CD8-positive, alpha-beta T cell (primary cell): ENCODE measurements at regions of chr12 and their contacts with region 1.

Region 1: DNA sequence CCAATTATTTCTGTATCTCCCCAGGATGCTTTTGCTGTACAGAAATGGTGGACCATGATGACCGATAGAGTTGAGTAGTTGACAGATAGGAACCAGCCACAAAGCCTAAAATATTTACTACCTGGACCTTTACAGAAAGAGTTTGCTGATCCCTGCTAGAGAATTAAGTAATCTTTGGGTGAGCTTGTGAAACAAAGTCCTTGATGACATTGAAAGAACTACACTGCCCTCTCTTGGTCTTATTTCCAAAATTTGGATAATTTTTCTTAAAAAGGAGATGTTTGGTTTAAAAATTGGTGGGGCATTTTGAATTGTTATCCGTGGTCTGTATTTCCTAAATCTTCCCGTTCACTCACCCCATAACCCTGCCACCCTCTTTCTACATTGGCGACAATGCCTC is 13.7 kb upstream of the TCTN1 start:
- DNase-seq: peak in 2 of 9 experiments; percentile 61 to 73
- ATAC-seq: peak; percentile 48
- H3K4me3 ChIP-seq: no peak overlapping the region
- H3K4me3 Mint-ChIP-seq: no peak overlapping the region
- H3K27ac ChIP-seq: no peak overlapping the region
- H3K27ac Mint-ChIP-seq: peak overlapping the region; percentile 34
- H3K4me1 ChIP-seq: no peaks in the 10 kb centered on the region
- H3K4me1 Mint-ChIP-seq: peaks cover 4% of the 10 kb centered on the region
- H3K27me3 ChIP-seq: no peaks in the 10 kb centered on the region
- H3K27me3 Mint-ChIP-seq: no peaks in the 10 kb centered on the region
- CTCF ChIP-seq: peak; percentile 56

Region 2: GRCh38 chr12:110100315-110100970 is 499.8 kb before region 1 on chr12:
- CTCF ChIA-PET with region 1: interaction called, 4 read pairs
- POLR2A ChIA-PET with region 1: no interaction called
- intact Hi-C with region 1: loop called in 1 of 2 experiments (anchors 1 kb)
- DNase-seq: peak; percentile 15 to 82 (median 66)
- ATAC-seq: peak; percentile 85
- H3K4me3 ChIP-seq: no peak overlapping the region
- H3K4me3 Mint-ChIP-seq: no peak overlapping the region
- H3K27ac ChIP-seq: peak overlapping the region in 1 of 2 experiments; percentile 21
- H3K27ac Mint-ChIP-seq: peak overlapping the region; percentile 24
- H3K4me1 ChIP-seq: peaks cover 4% of the 10 kb centered on the region
- H3K4me1 Mint-ChIP-seq: peaks cover 7% of the 10 kb centered on the region
- H3K27me3 ChIP-seq: no peaks in the 10 kb centered on the region
- H3K27me3 Mint-ChIP-seq: no peaks in the 10 kb centered on the region
- CTCF ChIP-seq: peak; percentile 99

Region 3: DNA sequence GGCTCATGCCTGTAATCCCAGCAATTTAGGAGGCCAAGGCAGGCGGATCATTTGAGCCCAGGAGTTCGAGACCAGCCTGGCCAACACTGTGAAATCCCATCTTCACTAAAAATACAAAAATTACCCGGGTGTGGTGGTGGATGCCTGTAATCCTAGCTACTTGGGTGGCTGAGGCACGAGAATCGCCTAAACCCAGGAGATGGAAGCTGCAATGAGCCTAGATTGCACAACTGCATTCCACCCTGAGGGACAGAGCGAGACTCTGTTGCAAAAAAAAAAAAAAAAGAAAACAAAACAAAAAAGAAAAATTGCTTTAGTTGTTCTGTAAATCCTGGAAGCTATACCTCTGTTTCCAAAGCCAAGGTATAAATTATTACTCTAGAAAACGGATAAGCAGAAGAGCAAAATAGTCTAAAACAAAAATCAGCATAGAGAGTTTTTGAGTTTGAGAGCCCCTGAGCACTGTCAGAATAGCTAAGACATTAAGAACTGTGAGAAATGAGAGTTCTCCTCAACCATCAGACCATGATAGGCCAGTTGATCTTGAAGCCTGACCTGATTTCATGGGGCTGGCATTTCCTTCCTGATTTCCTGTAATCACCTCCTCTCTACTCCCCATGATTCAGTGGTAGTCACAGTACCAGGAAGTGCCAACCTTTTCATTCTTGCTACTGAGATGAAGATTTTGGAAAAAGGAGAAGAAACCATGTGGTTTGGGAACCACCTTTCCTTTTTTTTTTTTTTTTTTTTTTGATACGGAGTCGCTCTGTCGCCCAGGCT is 287.5 kb before region 1 on chr12:
- CTCF ChIA-PET with region 1: no interaction called
- POLR2A ChIA-PET with region 1: no interaction called
- intact Hi-C with region 1: no loop called
- DNase-seq: peak in 2 of 9 experiments; percentile 13 to 20
- ATAC-seq: no peak
- H3K4me3 ChIP-seq: no peak overlapping the region
- H3K4me3 Mint-ChIP-seq: peak overlapping the region; percentile 8
- H3K27ac ChIP-seq: no peak overlapping the region
- H3K27ac Mint-ChIP-seq: peak overlapping the region; percentile 37
- H3K4me1 ChIP-seq: peaks cover 13% of the 10 kb centered on the region
- H3K4me1 Mint-ChIP-seq: peaks cover 54% of the 10 kb centered on the region
- H3K27me3 ChIP-seq: no peaks in the 10 kb centered on the region
- H3K27me3 Mint-ChIP-seq: no peaks in the 10 kb centered on the region
- CTCF ChIP-seq: no peak

Region 4: DNA sequence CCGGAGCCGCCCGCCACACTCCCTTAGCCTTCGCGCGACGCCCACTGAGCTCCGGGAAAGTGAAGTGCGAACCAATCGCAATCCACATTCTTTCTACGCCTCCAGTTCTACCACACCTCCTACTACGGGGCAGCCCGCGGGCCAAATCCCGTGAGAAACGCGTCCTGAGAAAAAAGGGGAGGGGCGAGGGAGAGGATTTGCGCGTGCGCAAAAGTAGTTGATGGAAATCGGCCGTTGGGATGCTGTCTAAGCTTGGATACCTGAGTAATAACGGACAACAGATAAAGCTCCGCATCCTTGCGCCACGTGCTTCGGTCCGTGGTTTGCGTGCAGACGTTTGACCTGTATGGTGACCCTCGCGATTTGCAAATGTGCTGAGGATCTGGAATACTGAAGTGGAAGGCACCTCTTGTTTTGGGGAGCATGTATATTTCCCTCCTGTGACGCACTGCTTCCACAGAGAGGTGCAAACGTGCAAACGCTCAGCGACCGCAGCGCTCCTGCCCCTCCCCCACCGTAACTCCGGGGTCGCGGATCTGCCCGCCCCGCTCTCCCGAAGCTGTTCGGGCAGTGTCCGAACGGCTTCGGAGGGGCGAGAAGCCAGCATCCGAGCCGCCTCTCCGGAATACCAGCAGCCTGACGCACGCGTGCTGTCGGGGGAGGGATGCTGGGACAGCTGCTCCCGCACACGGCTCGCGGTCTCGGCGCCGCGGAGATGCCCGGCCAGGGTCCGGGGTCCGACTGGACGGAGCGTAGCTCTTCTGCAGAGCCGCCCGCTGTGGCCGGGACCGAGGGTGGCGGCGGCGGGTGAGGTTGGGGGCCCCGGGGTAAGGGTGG is 131.8 kb before region 1 on chr12 and contains the starts of genes FAM216A and GPN3:
- CTCF ChIA-PET with region 1: interaction called, 73 read pairs
- POLR2A ChIA-PET with region 1: interaction called, 11 read pairs
- intact Hi-C with region 1: loop called (anchors 1 kb)
- DNase-seq: peak; percentile 89 to 98 (median 95)
- ATAC-seq: peak; percentile 89
- H3K4me3 ChIP-seq: peak within 1 kb of the TSS; percentile 90 to 96
- H3K4me3 Mint-ChIP-seq: peak within 1 kb of the TSS; percentile 99
- H3K27ac ChIP-seq: peak within 1 kb of the TSS; percentile 74 to 87
- H3K27ac Mint-ChIP-seq: peak within 1 kb of the TSS; percentile 95
- H3K4me1 ChIP-seq: peaks cover 23% of the 10 kb centered on the region
- H3K4me1 Mint-ChIP-seq: peaks cover 43% of the 10 kb centered on the region
- H3K27me3 ChIP-seq: no peaks in the 10 kb centered on the region
- H3K27me3 Mint-ChIP-seq: no peaks in the 10 kb centered on the region
- CTCF ChIP-seq: no peak
- total RNA-seq, gene FAM216A: 3.5 to 4.5 TPM
- total RNA-seq, gene GPN3: 5.9 to 6.2 TPM

Region 5: GRCh38 chr12:110513842-110514241 is 86.4 kb before region 1 on chr12:
- CTCF ChIA-PET with region 1: interaction called, 128 read pairs
- POLR2A ChIA-PET with region 1: no interaction called
- intact Hi-C with region 1: loop called (anchors 1 kb)
- DNase-seq: no peak
- ATAC-seq: no peak
- H3K4me3 ChIP-seq: no peak overlapping the region
- H3K4me3 Mint-ChIP-seq: no peak overlapping the region
- H3K27ac ChIP-seq: no peak overlapping the region
- H3K27ac Mint-ChIP-seq: no peak overlapping the region
- H3K4me1 ChIP-seq: no peaks in the 10 kb centered on the region
- H3K4me1 Mint-ChIP-seq: no peaks in the 10 kb centered on the region
- H3K27me3 ChIP-seq: no peaks in the 10 kb centered on the region
- H3K27me3 Mint-ChIP-seq: no peaks in the 10 kb centered on the region
- CTCF ChIP-seq: no peak

Region 6: DNA sequence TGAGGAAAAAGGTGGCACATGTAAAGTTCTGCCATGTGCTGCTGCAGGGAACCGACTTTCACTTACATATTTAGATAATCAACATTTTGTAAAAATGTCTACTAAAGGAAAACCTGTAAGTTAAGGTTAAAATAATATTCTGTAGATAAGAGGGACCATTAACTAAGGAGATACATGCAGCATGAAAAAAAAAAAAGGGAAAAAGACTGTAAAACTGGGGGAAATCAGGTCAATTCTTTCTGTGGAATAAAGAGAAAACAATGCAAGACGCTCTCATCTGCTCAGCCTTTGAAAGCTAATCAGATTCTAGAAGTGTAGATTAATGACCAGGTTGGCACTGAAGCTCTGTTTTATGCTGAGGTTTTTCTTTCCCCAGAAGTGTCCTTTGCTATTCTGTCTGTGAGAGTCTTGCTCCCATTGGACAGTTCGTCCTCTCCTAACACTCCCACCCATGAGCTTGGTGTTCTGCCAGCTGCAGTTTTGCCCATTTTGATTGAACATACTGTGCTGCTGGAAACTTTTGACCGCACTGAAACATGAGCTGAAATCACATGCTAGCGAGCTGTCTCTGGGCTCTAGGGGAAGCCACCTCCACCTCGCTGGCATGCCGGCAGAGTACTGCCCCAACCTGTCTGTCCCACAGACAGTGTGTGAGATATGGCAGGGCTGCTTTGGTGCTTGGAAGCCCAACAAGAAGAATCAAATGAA is 56.8 kb before region 1 on chr12:
- CTCF ChIA-PET with region 1: interaction called, 291 read pairs
- POLR2A ChIA-PET with region 1: no interaction called
- intact Hi-C with region 1: no loop called
- DNase-seq: no peak
- ATAC-seq: no peak
- H3K4me3 ChIP-seq: no peak overlapping the region
- H3K4me3 Mint-ChIP-seq: no peak overlapping the region
- H3K27ac ChIP-seq: no peak overlapping the region
- H3K27ac Mint-ChIP-seq: peak overlapping the region; percentile 2
- H3K4me1 ChIP-seq: no peaks in the 10 kb centered on the region
- H3K4me1 Mint-ChIP-seq: peaks cover 22% of the 10 kb centered on the region
- H3K27me3 ChIP-seq: no peaks in the 10 kb centered on the region
- H3K27me3 Mint-ChIP-seq: no peaks in the 10 kb centered on the region
- CTCF ChIP-seq: no peak

Region 7: GRCh38 chr12:110577717-110578521 is 22.3 kb before region 1 on chr12:
- CTCF ChIA-PET with region 1: interaction called, 39 read pairs
- POLR2A ChIA-PET with region 1: interaction called, 4 read pairs
- intact Hi-C with region 1: no loop called
- DNase-seq: peak in 8 of 9 experiments; percentile 11 to 73 (median 36)
- ATAC-seq: peak; percentile 37
- H3K4me3 ChIP-seq: peak overlapping the region; percentile 16 to 26
- H3K4me3 Mint-ChIP-seq: peak overlapping the region; percentile 76
- H3K27ac ChIP-seq: peak overlapping the region; percentile 44 to 93
- H3K27ac Mint-ChIP-seq: peak overlapping the region; percentile 88
- H3K4me1 ChIP-seq: peaks cover 58% of the 10 kb centered on the region
- H3K4me1 Mint-ChIP-seq: peaks cover 78% of the 10 kb centered on the region
- H3K27me3 ChIP-seq: no peaks in the 10 kb centered on the region
- H3K27me3 Mint-ChIP-seq: no peaks in the 10 kb centered on the region
- CTCF ChIP-seq: no peak

Region 8: DNA sequence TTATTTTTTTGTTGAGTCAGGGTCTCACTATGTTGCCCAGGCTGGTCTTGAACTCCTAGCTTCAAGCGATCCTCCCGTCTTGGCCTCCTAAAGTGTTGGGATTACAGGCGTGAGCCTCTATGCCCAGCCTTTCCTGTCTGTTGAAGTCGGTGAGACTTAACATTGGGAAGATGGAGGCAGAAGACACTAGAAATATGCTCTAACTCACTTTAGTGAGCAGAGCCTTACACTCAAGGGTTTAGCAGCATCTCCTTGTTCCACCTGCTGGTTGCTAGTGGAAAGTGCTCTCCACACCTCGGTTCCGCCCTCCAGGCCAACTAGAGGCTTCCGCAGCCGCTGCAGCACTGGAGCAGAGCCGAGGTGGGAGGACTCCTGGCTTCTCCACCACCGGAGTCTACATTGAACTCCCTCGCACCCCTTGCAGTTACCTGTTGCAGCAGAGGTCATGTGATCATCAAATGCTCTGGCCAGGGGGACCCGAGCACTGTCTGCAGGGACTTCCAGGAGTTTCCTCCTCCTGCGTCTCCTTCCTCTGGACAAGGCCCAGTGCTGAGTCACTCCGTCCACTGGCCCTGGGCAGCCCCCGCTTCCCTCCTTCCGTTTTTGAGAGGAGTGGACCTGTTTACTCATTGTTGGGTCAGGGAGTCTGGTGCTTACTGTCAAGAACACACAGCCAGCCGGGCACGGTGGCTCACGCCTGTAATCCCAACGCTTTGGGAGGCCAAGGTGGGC is 98.1 kb after region 1 on chr12:
- CTCF ChIA-PET with region 1: interaction called, 23 read pairs
- POLR2A ChIA-PET with region 1: interaction called, 3 read pairs
- intact Hi-C with region 1: loop called (anchors 1 to 2 kb)
- DNase-seq: peak; percentile 57 to 90 (median 76)
- ATAC-seq: peak; percentile 100
- H3K4me3 ChIP-seq: no peak overlapping the region
- H3K4me3 Mint-ChIP-seq: peak overlapping the region; percentile 16
- H3K27ac ChIP-seq: no peak overlapping the region
- H3K27ac Mint-ChIP-seq: peak overlapping the region; percentile 34
- H3K4me1 ChIP-seq: peaks cover 7% of the 10 kb centered on the region
- H3K4me1 Mint-ChIP-seq: peaks cover 9% of the 10 kb centered on the region
- H3K27me3 ChIP-seq: no peaks in the 10 kb centered on the region
- H3K27me3 Mint-ChIP-seq: no peaks in the 10 kb centered on the region
- CTCF ChIP-seq: peak; percentile 83